GM10248 (cell line): ENCODE measurements at regions of chr4 and their contacts with region 1.

Region 1: GRCh38 chr4:27000820-27001219 is 140.2 kb downstream of the STIM2 start:
- DNase-seq: no peak
- CTCF ChIP-seq: peak; percentile 52

Region 2: GRCh38 chr4:26860157-26860921 is 140.5 kb before region 1 on chr4 and contains the start of gene STIM2:
- CTCF ChIA-PET with region 1: interaction called, 12 read pairs
- POLR2A ChIA-PET with region 1: interaction called, 3 read pairs
- DNase-seq: peak; percentile 91
- CTCF ChIP-seq: peak; percentile 38

Region 3: DNA sequence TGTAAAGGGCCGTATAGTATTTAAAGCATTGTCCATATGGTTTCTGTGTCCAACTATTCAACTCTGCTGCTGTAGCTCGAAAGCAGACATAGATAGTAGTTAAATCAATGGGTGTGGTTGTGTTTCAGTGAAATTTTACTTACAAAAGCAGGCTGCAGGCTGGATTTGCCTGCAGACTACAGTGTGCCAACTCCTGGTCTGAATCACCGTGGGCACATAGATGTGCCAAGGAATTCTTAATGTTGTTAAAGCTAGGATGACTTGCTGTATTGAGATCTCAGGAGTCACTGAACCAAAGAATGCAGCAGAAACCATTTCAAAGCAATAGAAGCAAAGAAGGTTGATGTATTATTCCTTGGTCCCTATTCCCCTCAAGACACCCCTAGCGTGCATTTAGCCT is 238.8 kb after region 1 on chr4:
- CTCF ChIA-PET with region 1: no interaction called
- POLR2A ChIA-PET with region 1: no interaction called
- DNase-seq: no peak
- CTCF ChIP-seq: no peak